IMR-90 (cell line): ENCODE measurements at regions of chr2 and their contacts with region 1.

Region 1: GRCh38 chr2:169050478-169051240 is 18.7 kb upstream of the DHRS9 start:
- DNase-seq: no peak
- ATAC-seq: no peak
- H3K4me3 ChIP-seq: no peak overlapping the region
- H3K27ac ChIP-seq: no peak overlapping the region
- H3K4me1 ChIP-seq: no peaks in the 10 kb centered on the region
- H3K27me3 ChIP-seq: no peaks in the 10 kb centered on the region
- CTCF ChIP-seq: no peak
- POLR2A ChIP-seq: no peak
- RAD21 ChIP-seq: no peak

Region 2: DNA sequence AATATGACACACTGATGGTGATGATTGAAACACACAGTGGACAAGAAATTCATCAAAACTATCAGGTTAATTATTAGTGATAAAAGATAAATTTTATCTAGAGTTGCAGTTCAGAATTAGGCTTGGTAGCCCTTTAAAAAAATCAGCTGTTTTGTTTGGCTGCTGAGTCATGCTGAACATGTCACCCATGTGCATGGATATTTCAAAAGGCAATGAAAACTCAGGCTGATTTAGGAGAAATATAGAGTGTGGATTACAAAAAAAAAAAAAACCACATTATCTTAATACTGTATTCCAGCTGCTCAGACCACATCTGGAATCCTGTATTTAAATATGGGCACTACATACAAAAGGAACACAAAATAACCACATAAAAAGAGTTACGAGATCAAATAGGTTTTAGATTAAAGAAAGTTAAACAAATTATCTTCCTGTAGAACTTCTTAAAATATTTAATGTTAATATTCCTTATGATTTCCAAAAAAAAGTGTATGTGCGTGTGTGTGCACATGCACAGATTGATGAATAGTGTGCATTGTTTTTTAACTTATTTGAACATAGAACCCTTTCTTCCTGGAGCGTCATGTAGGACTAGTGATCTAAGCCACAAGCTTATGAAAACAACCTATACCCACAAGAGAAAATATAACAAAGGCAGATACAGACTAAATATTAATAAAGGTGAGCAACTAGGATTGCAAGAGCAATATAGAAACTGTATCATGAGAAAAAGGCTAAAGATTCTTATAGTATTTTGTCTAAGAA is 989.5 kb before region 1 on chr2:
- CTCF ChIA-PET with region 1: no interaction called
- POLR2A ChIA-PET with region 1: no interaction called
- dilution Hi-C with region 1: no loop called
- in situ Hi-C with region 1: no loop called
- intact Hi-C with region 1: loop called (anchors 5 kb)
- DNase-seq: peak; percentile 67
- ATAC-seq: peak; percentile 60
- H3K4me3 ChIP-seq: no peak overlapping the region
- H3K27ac ChIP-seq: peak overlapping the region; percentile 36; the same call in 1 of the 2 replicates
- H3K4me1 ChIP-seq: peaks cover 2% of the 10 kb centered on the region; the same call in 1 of the 2 replicates
- H3K27me3 ChIP-seq: no peaks in the 10 kb centered on the region
- CTCF ChIP-seq: no peak
- POLR2A ChIP-seq: no peak
- RAD21 ChIP-seq: no peak

Region 3: DNA sequence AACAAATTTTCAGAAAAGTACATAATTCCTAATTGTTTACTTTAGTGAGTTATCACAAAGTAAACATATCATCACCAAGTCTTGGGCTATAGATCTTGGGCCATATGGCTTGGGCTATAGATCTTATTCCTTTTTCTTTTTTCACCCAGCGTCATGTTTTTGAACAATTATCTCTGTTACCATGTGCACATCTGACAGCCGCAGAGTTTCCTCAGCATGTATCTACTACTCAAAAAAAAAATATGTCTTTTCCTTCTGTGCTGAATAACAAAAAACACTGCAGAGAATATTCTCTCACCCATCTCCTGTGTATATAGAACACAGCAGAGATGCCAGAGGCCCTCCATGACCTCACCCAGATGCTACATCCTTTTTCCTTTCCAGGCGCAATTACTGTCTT is 1051.1 kb after region 1 on chr2:
- CTCF ChIA-PET with region 1: no interaction called
- POLR2A ChIA-PET with region 1: no interaction called
- dilution Hi-C with region 1: no loop called
- in situ Hi-C with region 1: no loop called
- intact Hi-C with region 1: loop called (anchors 10 kb)
- DNase-seq: no peak
- ATAC-seq: no peak
- H3K4me3 ChIP-seq: no peak overlapping the region
- H3K27ac ChIP-seq: no peak overlapping the region
- H3K4me1 ChIP-seq: no peaks in the 10 kb centered on the region
- H3K27me3 ChIP-seq: no peaks in the 10 kb centered on the region
- CTCF ChIP-seq: no peak
- POLR2A ChIP-seq: no peak
- RAD21 ChIP-seq: no peak